Activated CD8-positive, alpha-beta T cell treated with anti-CD3 and anti-CD28 coated beads for 36 hours (primary cell): ENCODE measurements at regions of chr14 and their contacts with region 1.

Region 1: GRCh38 chr14:55373784-55374705 is 37.6 kb downstream of the ATG14 start:
- DNase-seq: peak; percentile 55
- ATAC-seq: peak; percentile 84
- H3K4me3 Mint-ChIP-seq: peak overlapping the region; percentile 58
- H3K27ac Mint-ChIP-seq: peak overlapping the region; percentile 98
- H3K4me1 Mint-ChIP-seq: peaks cover 46% of the 10 kb centered on the region
- H3K27me3 Mint-ChIP-seq: no peaks in the 10 kb centered on the region
- CTCF ChIP-seq: no peak

Region 2: GRCh38 chr14:55333711-55334485 is 40.1 kb before region 1 on chr14:
- CTCF ChIA-PET with region 1: interaction called, 4 read pairs
- POLR2A ChIA-PET with region 1: no interaction called
- intact Hi-C with region 1: loop called (anchors 5 kb)
- DNase-seq: peak; percentile 35
- ATAC-seq: peak; percentile 48
- H3K4me3 Mint-ChIP-seq: peak overlapping the region; percentile 38
- H3K27ac Mint-ChIP-seq: peak overlapping the region; percentile 87
- H3K4me1 Mint-ChIP-seq: peaks cover 79% of the 10 kb centered on the region
- H3K27me3 Mint-ChIP-seq: no peaks in the 10 kb centered on the region
- CTCF ChIP-seq: no peak

Region 3: DNA sequence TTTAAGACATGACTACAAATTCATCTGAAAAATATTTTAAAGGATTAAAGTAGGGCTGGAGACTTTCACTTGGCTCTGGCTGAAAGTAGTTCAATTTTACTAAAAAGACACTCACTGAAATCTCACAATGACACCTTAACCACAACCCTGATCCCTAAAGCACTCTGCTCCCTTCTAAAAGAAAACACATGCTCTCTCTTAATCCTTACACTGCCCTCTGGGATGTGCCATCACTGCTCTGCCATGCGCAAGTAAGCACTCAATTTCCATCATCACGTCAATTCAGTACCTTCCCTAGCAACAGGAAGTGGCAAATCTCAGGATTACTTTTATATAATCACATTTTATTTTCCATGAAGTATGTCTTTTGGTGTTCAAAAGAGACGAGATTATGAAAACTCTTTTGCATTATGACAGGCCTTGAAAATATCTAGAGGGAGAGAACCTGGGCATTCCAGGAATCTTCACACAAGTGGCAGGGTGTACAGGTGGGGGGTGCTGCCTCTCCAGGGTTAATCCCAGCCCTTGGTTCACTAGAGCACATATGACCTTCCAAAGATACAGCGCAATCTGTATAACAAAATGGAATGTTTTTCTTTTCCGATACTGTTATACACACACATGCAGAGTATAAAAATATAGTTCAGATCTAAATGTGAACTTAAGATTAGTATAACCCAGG is 30.3 kb after region 1 on chr14:
- CTCF ChIA-PET with region 1: no interaction called
- POLR2A ChIA-PET with region 1: no interaction called
- intact Hi-C with region 1: no loop called
- DNase-seq: no peak
- ATAC-seq: peak; percentile 43
- H3K4me3 Mint-ChIP-seq: no peak overlapping the region
- H3K27ac Mint-ChIP-seq: peak overlapping the region; percentile 62
- H3K4me1 Mint-ChIP-seq: peaks cover 49% of the 10 kb centered on the region
- H3K27me3 Mint-ChIP-seq: no peaks in the 10 kb centered on the region
- CTCF ChIP-seq: no peak